ENCODE measurements at regions of chr7 and their contacts with region 1.

Region 1: DNA sequence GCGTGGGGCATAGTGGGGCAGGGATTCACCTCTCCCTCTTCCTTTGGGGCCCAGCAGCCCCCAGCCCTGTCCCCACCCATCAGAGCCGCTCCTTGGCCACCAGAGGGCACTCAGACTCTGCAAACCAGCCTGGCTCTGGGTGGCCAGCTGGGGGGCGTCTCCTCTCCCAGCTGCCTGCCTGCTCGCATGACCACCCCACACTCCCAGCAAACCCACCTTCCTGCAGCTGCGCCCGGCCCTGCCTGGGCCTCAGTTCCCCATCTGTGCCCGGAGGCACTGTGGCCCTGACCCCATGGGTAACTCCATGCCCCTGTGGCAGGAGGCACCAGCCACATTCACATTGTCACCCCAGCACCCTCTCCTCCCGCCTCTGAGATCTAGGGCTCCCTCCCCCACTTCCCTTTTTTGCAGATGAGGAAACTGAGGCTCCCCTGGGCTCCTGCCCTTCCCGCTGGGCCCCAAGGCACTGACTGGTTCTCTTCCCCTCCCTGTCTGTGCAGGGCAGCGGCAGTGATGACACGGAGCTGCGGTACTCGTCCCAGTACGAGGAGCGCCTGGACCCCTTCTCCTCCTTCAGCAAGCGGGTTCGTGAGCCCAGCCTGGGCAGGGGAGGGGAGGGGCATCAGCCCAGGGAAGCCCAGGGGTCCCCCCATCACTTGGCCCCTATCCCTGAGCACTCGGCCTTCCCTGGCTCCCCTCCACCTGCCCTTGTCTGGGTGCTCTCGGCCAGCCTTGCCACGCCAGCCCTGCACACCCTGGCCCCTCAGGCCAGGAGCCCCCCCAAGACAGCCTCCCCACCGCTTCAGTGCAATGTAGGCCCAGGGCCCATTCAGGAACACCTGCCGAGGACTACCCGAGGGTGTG is 6.9 kb upstream of the SH2B2 start:
- DNase-seq: peak; percentile 33 to 72 (median 48)
- H3K4me3 ChIP-seq: no peak overlapping the region
- H3K4me3 Mint-ChIP-seq: no peak overlapping the region
- H3K27ac ChIP-seq: no peak overlapping the region
- H3K27ac Mint-ChIP-seq: peak overlapping the region in 1 of 8 donors; percentile 32
- H3K4me1 ChIP-seq: no peaks in the 10 kb centered on the region
- H3K4me1 Mint-ChIP-seq: peaks cover 4 to 11% (median 7%) of the 10 kb centered on the region in 3 donors
- H3K27me3 ChIP-seq: no peaks in the 10 kb centered on the region
- H3K27me3 Mint-ChIP-seq: no peaks in the 10 kb centered on the region

Region 2: DNA sequence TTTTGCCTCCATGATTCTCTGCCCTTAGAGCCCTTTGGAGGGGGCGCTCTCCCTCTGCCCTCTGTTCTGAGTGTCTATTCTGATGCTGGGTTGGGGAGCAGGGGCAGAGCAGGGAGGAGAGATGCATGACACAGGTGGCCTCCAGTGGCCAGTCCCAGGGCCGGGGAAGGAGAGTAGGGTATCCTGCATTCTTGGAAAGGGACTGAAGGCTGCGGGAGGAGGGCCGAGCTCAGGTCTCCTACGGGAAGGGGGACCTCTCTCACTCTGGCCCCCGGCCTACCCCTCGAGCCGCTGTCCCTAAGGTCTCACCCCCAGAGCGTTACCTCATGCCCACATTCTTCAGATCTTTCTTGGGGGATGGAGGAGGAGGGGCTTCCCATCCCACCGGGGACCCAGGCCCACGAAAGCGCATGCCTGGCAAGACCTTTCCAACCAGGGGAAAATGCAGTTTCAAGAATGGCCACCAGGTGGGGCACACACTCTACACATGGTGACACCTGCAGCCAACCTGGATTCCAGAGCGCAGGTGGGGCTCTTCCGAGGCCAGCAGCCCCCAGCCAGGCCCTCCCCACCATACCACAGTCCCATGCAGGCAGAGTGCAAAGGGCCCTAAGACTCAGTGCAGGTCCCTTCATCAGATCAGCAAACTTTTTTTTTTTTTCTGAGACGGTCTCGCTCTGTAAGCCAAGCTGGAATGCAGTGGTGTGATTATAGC is 737.1 kb before region 1 on chr7:
- CTCF ChIA-PET with region 1: interaction called, 56 read pairs
- POLR2A ChIA-PET with region 1: no interaction called
- DNase-seq: peak; percentile 36 to 76 (median 62)
- H3K4me3 ChIP-seq: no peak overlapping the region
- H3K4me3 Mint-ChIP-seq: no peak overlapping the region
- H3K27ac ChIP-seq: no peak overlapping the region
- H3K27ac Mint-ChIP-seq: peak overlapping the region in 2 of 8 donors; percentile 20 to 77
- H3K4me1 ChIP-seq: no peaks in the 10 kb centered on the region
- H3K4me1 Mint-ChIP-seq: peaks cover 0 to 5% (median 3%) of the 10 kb centered on the region in 3 donors
- H3K27me3 ChIP-seq: no peaks in the 10 kb centered on the region
- H3K27me3 Mint-ChIP-seq: peaks cover 3 to 5% of the 10 kb centered on the region in 2 donors

Region 3: DNA sequence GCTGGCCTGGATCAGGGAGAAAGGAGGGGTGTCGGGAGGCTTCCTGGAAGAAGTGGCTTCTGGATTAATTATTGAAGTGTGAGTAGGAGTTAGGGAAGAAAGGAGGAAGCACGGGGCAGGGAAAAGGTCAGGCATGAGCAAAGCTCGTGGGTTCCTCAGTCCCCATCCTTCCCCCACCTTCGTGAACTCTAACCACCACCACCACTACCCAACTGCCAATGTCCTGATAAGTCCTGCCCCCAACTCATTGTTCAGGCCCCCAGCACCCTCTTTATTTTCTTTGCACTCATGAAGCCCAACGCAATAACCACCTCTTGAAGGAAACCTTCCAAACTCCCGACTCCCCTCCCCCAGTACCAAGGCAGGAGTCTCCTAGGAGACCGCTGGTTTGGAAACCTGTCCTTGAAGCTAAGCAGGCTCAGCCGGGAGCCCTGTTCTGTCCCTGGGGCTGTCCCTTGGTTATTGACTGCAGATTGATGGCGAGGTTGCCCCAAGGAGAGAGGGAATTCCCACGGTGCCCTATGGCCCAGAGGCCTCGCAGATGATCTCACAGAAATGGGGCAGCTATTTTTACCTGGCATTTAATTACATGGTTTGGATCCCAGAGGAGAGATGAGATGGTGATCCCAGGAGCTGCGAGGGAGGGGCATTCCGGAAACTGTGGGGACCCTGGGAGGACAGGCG is 16.1 kb after region 1 on chr7:
- CTCF ChIA-PET with region 1: no interaction called
- POLR2A ChIA-PET with region 1: no interaction called
- DNase-seq: no peak
- H3K4me3 ChIP-seq: no peak overlapping the region
- H3K4me3 Mint-ChIP-seq: no peak overlapping the region
- H3K27ac ChIP-seq: no peak overlapping the region
- H3K27ac Mint-ChIP-seq: peak overlapping the region in 1 of 8 donors; percentile 43
- H3K4me1 ChIP-seq: peaks cover 4% of the 10 kb centered on the region
- H3K4me1 Mint-ChIP-seq: peaks cover 6 to 11% (median 7%) of the 10 kb centered on the region in 3 donors
- H3K27me3 ChIP-seq: no peaks in the 10 kb centered on the region
- H3K27me3 Mint-ChIP-seq: peaks cover 0 to 9% of the 10 kb centered on the region in 2 donors

Region 4: GRCh38 chr7:102390697-102391484 is 111.1 kb after region 1 on chr7:
- CTCF ChIA-PET with region 1: interaction called, 21 read pairs
- POLR2A ChIA-PET with region 1: no interaction called
- DNase-seq: peak; percentile 56 to 80 (median 60)
- H3K4me3 ChIP-seq: no peak overlapping the region
- H3K4me3 Mint-ChIP-seq: no peak overlapping the region
- H3K27ac ChIP-seq: no peak overlapping the region
- H3K27ac Mint-ChIP-seq: no peak overlapping the region
- H3K4me1 ChIP-seq: peaks cover 5% of the 10 kb centered on the region
- H3K4me1 Mint-ChIP-seq: peaks cover 5 to 6% (median 5%) of the 10 kb centered on the region in 3 donors
- H3K27me3 ChIP-seq: no peaks in the 10 kb centered on the region
- H3K27me3 Mint-ChIP-seq: no peaks in the 10 kb centered on the region

Measured in CD8-positive, alpha-beta memory T cell (primary cell).